ENCODE measurements at regions of chr2 and their contacts with region 1.

Region 1: GRCh38 chr2:107337209-107337898 is 451.4 kb upstream of the ST6GAL2 start:
- DNase-seq: no peak

Region 2: DNA sequence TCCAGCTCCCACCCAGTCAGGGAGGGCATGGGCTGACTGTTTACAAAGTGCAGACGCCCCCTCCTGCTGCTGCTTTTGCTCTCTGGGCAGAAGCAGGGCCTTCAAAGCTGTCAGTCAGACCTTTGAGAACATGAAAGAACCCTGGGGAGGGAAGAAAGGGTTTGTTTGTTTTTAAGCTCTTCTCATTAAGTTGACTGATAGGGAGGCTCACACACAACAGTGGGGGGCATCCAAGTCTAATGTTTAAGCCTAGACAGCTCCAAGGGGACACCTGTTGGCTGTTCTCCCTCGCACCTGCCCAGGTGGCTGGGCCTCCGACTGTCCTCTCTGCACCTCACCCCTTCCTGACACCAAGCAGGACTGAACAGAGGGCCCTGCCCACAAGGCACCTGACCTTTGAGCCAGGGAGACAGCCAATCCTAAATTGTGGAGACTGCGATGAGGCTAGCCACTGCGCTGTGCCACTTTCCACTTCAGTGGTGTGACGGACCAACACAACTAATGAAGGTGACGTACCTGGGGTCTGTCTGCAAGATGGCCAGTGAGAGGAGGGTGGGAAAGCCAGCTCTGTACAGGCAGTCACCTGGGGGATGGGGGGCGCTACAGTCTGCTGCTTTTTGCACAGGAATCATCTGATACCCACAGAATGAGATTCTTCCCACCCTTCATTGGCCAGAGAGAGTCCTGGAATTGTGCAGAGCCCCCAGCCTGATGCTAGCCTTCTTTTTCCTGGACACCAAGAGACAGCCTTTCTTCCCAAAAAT is 467.7 kb before region 1 on chr2:
- intact Hi-C with region 1: loop called in 1 of 2 experiments (anchors 10 kb)
- DNase-seq: no peak

Region 3: GRCh38 chr2:107303964-107304363 is 33.4 kb before region 1 on chr2:
- intact Hi-C with region 1: no loop called
- DNase-seq: no peak

Region 4: DNA sequence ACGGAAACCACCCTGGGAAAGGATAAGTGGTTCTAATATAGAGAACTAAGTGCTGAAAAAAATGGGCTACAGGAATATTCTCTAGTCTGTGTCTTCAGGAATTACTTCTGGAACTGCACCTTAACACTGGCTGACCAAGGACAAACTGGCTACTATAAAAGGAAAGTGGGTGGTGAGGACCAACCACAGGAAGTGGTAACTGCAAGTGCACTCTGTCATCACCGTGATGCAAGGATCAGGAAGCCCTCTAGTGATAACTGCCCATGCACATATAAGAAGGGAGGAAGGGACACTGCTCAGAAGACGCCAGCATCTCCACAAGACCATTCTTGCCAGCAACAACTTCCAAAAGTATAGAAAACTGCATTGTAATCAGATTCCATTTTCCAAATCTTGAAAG is 65.0 kb after region 1 on chr2:
- intact Hi-C with region 1: loop called in 1 of 2 experiments (anchors 10 kb)
- DNase-seq: no peak